ENCODE measurements at regions of chr10 and their contacts with region 1.

Region 1: GRCh38 chr10:102678842-102679289 is 34.6 kb downstream of the TRIM8 start:
- DNase-seq: peak; percentile 85

Region 2: DNA sequence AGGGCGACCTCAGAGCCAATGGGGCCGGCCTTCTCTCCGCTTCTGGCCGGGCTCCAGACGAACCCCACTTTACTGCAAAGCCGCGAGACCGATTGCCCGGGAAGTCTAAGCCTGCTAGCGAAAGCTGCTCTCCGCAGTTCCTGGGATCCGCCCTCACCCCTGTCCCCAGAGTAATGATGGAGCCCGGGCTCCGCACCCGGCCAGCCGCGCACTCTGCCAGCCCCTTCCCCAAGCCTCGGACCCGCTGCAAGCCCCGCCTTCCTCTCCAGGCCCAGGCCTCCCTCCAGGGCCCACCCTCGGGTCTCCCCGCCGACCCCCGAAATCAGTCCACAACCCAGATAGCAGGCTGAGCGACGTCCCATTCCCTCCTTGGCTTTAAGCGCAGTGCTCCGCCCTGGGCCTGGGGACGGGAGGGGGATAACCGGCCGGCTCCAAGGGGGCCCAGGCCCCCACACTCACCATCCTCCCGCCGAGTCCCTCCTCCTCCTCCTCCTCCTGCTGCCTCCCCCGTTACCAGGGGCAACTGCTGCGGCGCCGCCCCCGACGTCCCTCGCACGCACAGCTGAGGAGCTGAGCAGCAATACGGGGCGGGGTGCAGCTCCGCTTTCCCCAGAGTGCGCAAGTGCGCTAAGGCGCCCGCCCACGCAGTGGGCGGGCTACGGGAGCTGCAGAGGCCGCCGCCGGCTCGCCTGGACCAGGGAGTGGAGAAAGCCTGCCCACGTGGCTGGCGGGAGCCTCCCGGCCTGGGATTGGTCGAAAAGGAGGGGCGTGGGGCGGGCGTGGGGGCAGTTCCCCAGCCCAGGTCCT is 35.2 kb after region 1 on chr10 and contains the start of gene ARL3:
- CTCF ChIA-PET with region 1: interaction called, 25 read pairs
- POLR2A ChIA-PET with region 1: interaction called, 20 read pairs
- DNase-seq: peak; percentile 96

Region 3: GRCh38 chr10:102752934-102753664 is 74.2 kb after region 1 on chr10:
- CTCF ChIA-PET with region 1: no interaction called
- POLR2A ChIA-PET with region 1: no interaction called
- DNase-seq: peak; percentile 63

Region 4: GRCh38 chr10:102764389-102765178 is 85.7 kb after region 1 on chr10:
- CTCF ChIA-PET with region 1: no interaction called
- POLR2A ChIA-PET with region 1: no interaction called
- DNase-seq: no peak